K562 (cell line): ENCODE measurements at regions of chr6 and their contacts with region 1.

Region 1: GRCh38 chr6:7238900-7239589 is 74.0 kb downstream of the SSR1 start:
- DNase-seq: peak; percentile 86 to 95 (median 86)
- ATAC-seq: peak; percentile 90
- H3K4me3 ChIP-seq: no peak overlapping the region
- H3K27ac ChIP-seq: peak overlapping the region; percentile 5; the same call in 2 of the 3 replicates
- H3K4me1 ChIP-seq: peaks cover 30 to 32% of the 10 kb centered on the region in 2 experiments
- H3K27me3 ChIP-seq: no peaks in the 10 kb centered on the region
- CTCF ChIP-seq: peak; percentile 92 to 96 (median 94)
- EP300 ChIP-seq: peak; percentile 53
- POLR2A ChIP-seq: no peak; the same call in 1 of the 2 replicates
- RAD21 ChIP-seq: peak; percentile 82 to 94

Region 2: DNA sequence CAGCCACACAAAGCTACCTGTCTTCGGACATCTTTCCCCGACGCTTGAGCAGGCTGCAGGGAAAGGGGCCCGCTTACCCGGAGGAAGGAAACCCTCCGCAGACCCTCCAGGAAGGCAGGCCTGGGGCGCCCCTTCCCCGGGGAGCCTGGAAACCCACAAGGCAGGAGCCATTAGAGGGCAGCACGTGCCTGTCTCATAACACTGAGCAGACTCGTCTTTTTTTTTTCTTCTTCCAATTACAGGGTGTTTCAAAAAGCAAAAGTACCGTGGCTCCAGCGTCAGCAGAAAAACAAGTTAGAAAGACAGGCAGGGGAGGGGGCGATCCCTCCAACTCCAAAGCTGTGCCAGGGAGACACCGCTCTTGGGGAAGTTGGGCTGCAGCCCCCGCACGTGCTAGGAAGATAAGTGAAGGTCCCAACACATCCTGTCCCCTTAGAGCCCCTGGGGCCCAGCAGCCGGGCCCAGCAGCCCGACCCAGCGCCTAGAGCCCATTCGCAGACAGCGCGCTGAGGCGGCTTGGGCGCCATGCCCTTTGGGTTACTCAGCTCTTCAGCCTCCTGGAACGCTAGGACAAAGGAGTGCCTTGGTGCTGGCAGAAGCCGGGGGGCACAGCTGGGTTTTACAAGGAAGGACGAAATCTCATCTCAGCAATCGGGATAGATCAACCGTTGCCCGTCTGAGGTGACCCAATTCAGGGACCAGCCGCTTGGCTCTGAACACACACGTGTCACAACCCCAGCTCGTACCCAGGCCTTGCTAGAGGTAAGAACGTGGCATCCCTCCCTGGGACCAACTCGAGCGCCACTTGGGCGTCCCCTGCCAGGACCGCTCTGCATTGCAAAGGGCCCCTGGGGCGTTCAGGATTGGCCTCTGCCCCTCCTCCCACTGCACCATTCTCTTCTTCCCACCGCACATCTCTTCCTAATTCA is 514.2 kb before region 1 on chr6:
- CTCF ChIA-PET with region 1: interaction called, 16 read pairs
- POLR2A ChIA-PET with region 1: no interaction called
- in situ Hi-C with region 1: no loop called
- intact Hi-C with region 1: loop called (anchors 2 kb)
- DNase-seq: peak; percentile 60 to 82 (median 71)
- ATAC-seq: peak; percentile 90
- H3K4me3 ChIP-seq: no peak overlapping the region
- H3K27ac ChIP-seq: peak overlapping the region; percentile 24; the same call in 1 of the 3 replicates
- H3K4me1 ChIP-seq: peaks cover 10 to 23% of the 10 kb centered on the region in 2 experiments; a peak in 4 of 5 replicates
- H3K27me3 ChIP-seq: no peaks in the 10 kb centered on the region
- CTCF ChIP-seq: peak; percentile 80 to 92 (median 88)
- EP300 ChIP-seq: no peak
- POLR2A ChIP-seq: no peak
- RAD21 ChIP-seq: peak; percentile 80 to 87

Region 3: DNA sequence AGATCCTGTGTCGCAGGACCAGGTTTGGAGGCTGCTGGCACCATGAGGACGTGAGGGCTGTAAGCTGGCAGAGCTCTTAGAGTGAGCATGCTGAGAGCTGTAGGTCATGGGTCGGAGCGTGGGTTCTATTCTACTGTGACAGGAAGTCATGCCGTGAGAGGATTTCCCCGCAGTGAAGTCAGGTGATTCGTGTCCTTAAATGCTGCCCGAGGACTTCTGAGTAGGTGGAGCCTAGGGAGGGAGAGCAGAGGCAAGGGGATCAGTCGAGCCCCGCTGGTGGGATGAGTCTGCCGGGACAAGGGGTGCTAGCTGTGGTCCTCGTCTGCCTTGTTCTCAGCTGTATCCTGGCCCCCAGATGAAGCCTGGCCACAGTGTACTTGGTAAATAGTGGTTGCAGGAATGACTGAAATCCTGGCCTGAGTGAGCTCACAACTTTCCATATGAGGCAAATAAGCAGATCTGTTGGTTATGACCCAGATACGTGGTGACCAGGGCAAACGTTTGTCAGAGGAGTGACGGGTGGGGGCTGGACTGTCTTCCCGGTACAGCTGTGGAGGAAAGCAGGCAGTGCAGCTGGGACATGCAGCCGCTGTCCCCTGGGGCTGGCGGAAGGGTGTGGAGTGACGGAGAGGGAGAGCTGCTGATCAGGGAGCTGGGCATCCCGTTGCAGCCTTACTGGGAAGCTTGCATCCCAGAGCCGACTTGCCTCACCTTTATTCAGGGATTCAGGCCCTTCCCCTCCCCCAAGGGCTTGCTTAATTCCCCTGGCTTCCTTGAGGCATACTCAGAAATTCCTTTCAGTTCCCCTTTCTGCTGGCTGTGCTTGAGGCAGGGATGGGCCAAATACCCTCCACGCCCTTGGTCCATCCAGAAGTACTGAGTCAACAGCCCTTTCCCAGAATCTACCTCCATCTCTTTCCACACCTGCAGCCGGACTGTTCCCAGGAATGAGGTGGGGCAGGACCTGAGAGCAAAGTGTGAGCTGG is 382.2 kb before region 1 on chr6:
- CTCF ChIA-PET with region 1: no interaction called
- POLR2A ChIA-PET with region 1: no interaction called
- in situ Hi-C with region 1: no loop called
- intact Hi-C with region 1: no loop called
- DNase-seq: no peak
- ATAC-seq: no peak
- H3K4me3 ChIP-seq: no peak overlapping the region
- H3K27ac ChIP-seq: no peak overlapping the region
- H3K4me1 ChIP-seq: peaks cover 33 to 36% of the 10 kb centered on the region in 2 experiments
- H3K27me3 ChIP-seq: no peaks in the 10 kb centered on the region
- CTCF ChIP-seq: no peak
- EP300 ChIP-seq: no peak
- POLR2A ChIP-seq: no peak
- RAD21 ChIP-seq: no peak

Region 4: GRCh38 chr6:6927521-6928371 is 311.3 kb before region 1 on chr6:
- CTCF ChIA-PET with region 1: no interaction called
- POLR2A ChIA-PET with region 1: interaction called, 4 read pairs
- in situ Hi-C with region 1: no loop called
- intact Hi-C with region 1: loop called (anchors 10 kb)
- DNase-seq: peak; percentile 71 to 86 (median 84)
- ATAC-seq: peak; percentile 96
- H3K4me3 ChIP-seq: peak overlapping the region; percentile 12; the same call in 1 of the 2 replicates
- H3K27ac ChIP-seq: peak overlapping the region; percentile 40
- H3K4me1 ChIP-seq: peaks cover 8 to 27% of the 10 kb centered on the region in 2 experiments
- H3K27me3 ChIP-seq: no peaks in the 10 kb centered on the region
- CTCF ChIP-seq: peak; percentile 57 to 68 (median 58)
- EP300 ChIP-seq: no peak
- POLR2A ChIP-seq: peak; percentile 68
- RAD21 ChIP-seq: peak; percentile 59 to 71

Region 5: GRCh38 chr6:6969761-6970223 is 269.3 kb before region 1 on chr6:
- CTCF ChIA-PET with region 1: no interaction called
- POLR2A ChIA-PET with region 1: no interaction called
- in situ Hi-C with region 1: no loop called
- intact Hi-C with region 1: no loop called
- DNase-seq: peak; percentile 50 to 58 (median 52)
- ATAC-seq: peak; percentile 48
- H3K4me3 ChIP-seq: no peak overlapping the region
- H3K27ac ChIP-seq: peak overlapping the region; percentile 82; the same call in 1 of the 3 replicates
- H3K4me1 ChIP-seq: peaks cover 26 to 57% of the 10 kb centered on the region in 2 experiments; a peak in 4 of 5 replicates
- H3K27me3 ChIP-seq: no peaks in the 10 kb centered on the region
- CTCF ChIP-seq: no peak
- EP300 ChIP-seq: no peak
- POLR2A ChIP-seq: no peak
- RAD21 ChIP-seq: no peak

Region 6: DNA sequence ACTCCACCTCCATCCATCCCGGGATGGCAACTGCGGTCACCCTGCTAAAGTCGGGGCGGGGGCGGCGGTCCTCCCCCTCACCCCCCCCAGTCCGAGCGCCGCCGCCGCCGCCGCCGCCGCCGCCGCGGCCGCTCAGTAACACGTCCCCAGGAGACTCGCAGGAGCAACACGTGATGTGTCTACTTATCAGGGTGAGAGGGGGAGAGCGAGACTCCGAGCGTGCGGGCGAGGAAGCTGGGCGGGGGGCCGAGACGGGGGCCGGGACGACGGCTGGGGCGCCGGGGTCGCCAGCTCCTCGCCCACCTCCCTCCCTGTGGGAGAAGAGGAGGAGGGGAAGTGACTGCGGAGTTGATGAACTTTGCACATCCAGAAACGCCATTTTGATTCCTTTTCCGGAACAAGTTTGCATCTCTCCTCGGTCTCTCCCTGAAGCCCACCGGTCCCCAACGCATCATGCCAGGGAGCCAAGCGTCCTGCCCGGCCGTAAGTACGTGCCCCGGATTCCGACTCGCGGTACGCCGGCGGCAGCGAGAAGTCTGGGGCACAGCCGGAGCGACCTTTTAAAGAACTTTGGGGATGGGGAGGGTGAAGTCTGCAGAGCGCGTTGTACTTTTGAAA is 131.4 kb before region 1 on chr6 and contains the start of gene RREB1:
- CTCF ChIA-PET with region 1: no interaction called
- POLR2A ChIA-PET with region 1: no interaction called
- in situ Hi-C with region 1: no loop called
- intact Hi-C with region 1: loop called (anchors 5 kb)
- DNase-seq: peak; percentile 90 to 94 (median 92)
- ATAC-seq: peak; percentile 76
- H3K4me3 ChIP-seq: peak within 1 kb of the TSS; percentile 64
- H3K27ac ChIP-seq: peak within 1 kb of the TSS; percentile 92
- H3K4me1 ChIP-seq: peaks cover 37 to 38% of the 10 kb centered on the region in 2 experiments
- H3K27me3 ChIP-seq: no peaks in the 10 kb centered on the region
- CTCF ChIP-seq: no peak
- EP300 ChIP-seq: 0 out of 2 replicates have a peak, but pooled peaks have one; percentile 27
- POLR2A ChIP-seq: no peak; the same call in 1 of the 2 replicates
- RAD21 ChIP-seq: no peak
- polyA plus RNA-seq, gene RREB1: 3.3 to 4.8 TPM

Region 7: GRCh38 chr6:7292596-7293255 is 53.7 kb after region 1 on chr6:
- CTCF ChIA-PET with region 1: no interaction called
- POLR2A ChIA-PET with region 1: no interaction called
- in situ Hi-C with region 1: no loop called
- intact Hi-C with region 1: no loop called
- DNase-seq: no peak
- ATAC-seq: no peak
- H3K4me3 ChIP-seq: no peak overlapping the region
- H3K27ac ChIP-seq: no peak overlapping the region
- H3K4me1 ChIP-seq: no peaks in the 10 kb centered on the region
- H3K27me3 ChIP-seq: no peaks in the 10 kb centered on the region
- CTCF ChIP-seq: no peak
- EP300 ChIP-seq: no peak
- POLR2A ChIP-seq: no peak
- RAD21 ChIP-seq: no peak

Region 8: GRCh38 chr6:7389451-7390225 is 150.6 kb after region 1 on chr6 and contains the starts of genes CAGE1 and RIOK1:
- CTCF ChIA-PET with region 1: no interaction called
- POLR2A ChIA-PET with region 1: no interaction called
- in situ Hi-C with region 1: no loop called
- intact Hi-C with region 1: no loop called
- DNase-seq: peak; percentile 95 to 98 (median 96)
- ATAC-seq: peak; percentile 98
- H3K4me3 ChIP-seq: peak within 1 kb of the TSS; percentile 67
- H3K27ac ChIP-seq: peak within 1 kb of the TSS; percentile 77
- H3K4me1 ChIP-seq: peaks cover 20 to 21% of the 10 kb centered on the region in 2 experiments; a peak in 4 of 5 replicates
- H3K27me3 ChIP-seq: no peaks in the 10 kb centered on the region
- CTCF ChIP-seq: peak; percentile 28 to 53 (median 36); a peak in 4 of 6 replicates
- EP300 ChIP-seq: no peak; the same call in 1 of the 2 replicates
- POLR2A ChIP-seq: peak; percentile 98
- RAD21 ChIP-seq: no peak; a peak in 2 of 4 replicates
- polyA plus RNA-seq, gene CAGE1: not detected
- polyA plus RNA-seq, gene RIOK1: 51.7 to 101 TPM